A549 (cell line): ENCODE measurements at regions of chr11 and their contacts with region 1.

Region 1: GRCh38 chr11:1694064-1694845 is 2.7 kb upstream of the KRTAP5-6 start:
- DNase-seq: peak; percentile 80 to 88
- ATAC-seq: peak; percentile 82 to 95
- H3K4me3 ChIP-seq: peak overlapping the region; percentile 62
- H3K27ac ChIP-seq: peak overlapping the region; percentile 87 to 92
- H3K4me1 ChIP-seq: no peaks in the 10 kb centered on the region
- CTCF ChIP-seq: peak; percentile 88
- EP300 ChIP-seq: no peak
- POLR2A ChIP-seq: no peak
- RAD21 ChIP-seq: peak; percentile 94 to 99

Region 2: GRCh38 chr11:1532014-1532586 is 162.2 kb before region 1 on chr11:
- CTCF ChIA-PET with region 1: no interaction called
- POLR2A ChIA-PET with region 1: no interaction called
- DNase-seq: no peak
- ATAC-seq: no peak
- H3K4me3 ChIP-seq: no peak overlapping the region
- H3K27ac ChIP-seq: no peak overlapping the region
- H3K4me1 ChIP-seq: no peaks in the 10 kb centered on the region
- CTCF ChIP-seq: no peak
- EP300 ChIP-seq: no peak
- POLR2A ChIP-seq: no peak
- RAD21 ChIP-seq: no peak

Region 3: GRCh38 chr11:1652771-1653540 is 41.3 kb before region 1 on chr11:
- CTCF ChIA-PET with region 1: interaction called, 147 read pairs
- POLR2A ChIA-PET with region 1: interaction called, 5 read pairs
- DNase-seq: peak; percentile 51 to 89
- ATAC-seq: peak; percentile 79 to 93
- H3K4me3 ChIP-seq: no peak overlapping the region
- H3K27ac ChIP-seq: peak overlapping the region in 1 of 2 experiments; percentile 26; a peak in 2 of 6 replicates
- H3K4me1 ChIP-seq: no peaks in the 10 kb centered on the region; the same call in 2 of the 3 replicates
- CTCF ChIP-seq: peak; percentile 93
- EP300 ChIP-seq: no peak
- POLR2A ChIP-seq: no peak
- RAD21 ChIP-seq: peak; percentile 94 to 97

Region 4: DNA sequence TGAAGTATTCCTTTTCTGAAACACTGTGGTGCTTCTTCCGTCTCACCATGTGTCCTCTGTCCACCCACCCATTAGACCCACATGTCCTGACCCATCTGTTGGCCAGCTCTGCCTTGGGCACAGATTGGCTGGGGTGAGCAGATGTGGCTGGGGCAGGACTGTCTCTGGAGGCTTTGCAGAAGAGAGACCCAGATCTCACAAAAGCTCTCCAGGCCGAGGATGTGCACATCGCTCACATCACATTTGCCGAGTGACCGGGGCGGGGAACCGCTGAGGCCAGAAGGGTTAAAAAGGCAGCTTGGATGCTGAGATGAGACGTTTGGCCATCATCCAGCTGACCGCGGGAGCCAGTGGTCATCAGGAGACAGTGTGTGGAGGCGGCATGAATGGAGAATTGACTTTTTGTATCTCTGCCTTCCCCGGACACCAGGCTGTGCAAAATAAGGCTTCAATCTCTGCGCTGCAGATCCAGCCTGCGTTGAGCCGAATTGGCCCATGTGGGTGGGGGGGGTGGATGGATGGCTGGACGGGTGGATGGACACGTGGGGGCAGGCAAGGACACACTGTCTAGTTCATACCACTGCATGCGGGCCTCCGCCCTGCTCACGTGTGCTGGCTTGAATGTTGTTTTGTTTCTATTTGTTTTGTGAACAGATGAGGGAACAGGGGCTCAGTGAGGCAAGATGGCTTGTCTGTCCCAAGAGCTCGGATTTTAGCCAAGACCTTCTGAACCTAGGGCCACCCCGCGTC is 50.1 kb after region 1 on chr11:
- CTCF ChIA-PET with region 1: interaction called, 12 read pairs
- POLR2A ChIA-PET with region 1: interaction called, 5 read pairs
- DNase-seq: no peak
- ATAC-seq: peak in 1 of 2 experiments; percentile 9; a peak in 2 of 6 replicates
- H3K4me3 ChIP-seq: no peak overlapping the region
- H3K27ac ChIP-seq: no peak overlapping the region
- H3K4me1 ChIP-seq: peaks cover 6% of the 10 kb centered on the region; the same call in 2 of the 3 replicates
- CTCF ChIP-seq: no peak
- EP300 ChIP-seq: no peak
- POLR2A ChIP-seq: no peak
- RAD21 ChIP-seq: no peak

Region 5: DNA sequence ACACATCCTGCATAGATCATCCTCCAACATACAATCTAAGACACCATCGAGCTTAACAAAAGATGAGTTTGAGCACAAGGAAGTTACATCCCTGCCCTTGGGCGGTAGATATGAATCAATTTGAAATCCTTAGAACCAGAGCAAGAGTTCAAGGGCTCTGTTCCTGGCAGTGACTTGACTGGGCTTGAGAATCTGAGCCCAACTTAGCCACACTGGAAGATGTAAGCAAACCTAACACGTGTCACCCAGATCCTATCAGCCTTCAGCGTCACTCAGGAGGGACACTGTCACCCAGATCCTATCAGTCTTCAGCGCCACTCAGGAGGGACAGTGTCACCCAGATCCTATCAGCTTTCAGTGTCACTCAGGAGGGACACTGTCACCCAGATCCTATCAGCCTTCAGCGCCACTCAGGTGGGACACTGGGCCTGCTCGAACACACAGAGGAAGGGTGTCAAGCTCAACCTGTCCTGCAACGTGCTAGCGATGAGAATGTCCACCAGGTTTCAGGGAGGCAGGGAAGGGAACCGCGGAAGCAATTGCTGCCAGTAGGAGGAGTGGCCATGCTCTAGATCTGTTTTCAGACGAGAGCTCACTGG is 102.3 kb after region 1 on chr11:
- CTCF ChIA-PET with region 1: interaction called, 20 read pairs
- POLR2A ChIA-PET with region 1: no interaction called
- DNase-seq: no peak
- ATAC-seq: peak in 1 of 2 experiments; percentile 45; a peak in 3 of 6 replicates
- H3K4me3 ChIP-seq: no peak overlapping the region
- H3K27ac ChIP-seq: no peak overlapping the region
- H3K4me1 ChIP-seq: no peaks in the 10 kb centered on the region
- CTCF ChIP-seq: no peak
- EP300 ChIP-seq: no peak
- POLR2A ChIP-seq: no peak
- RAD21 ChIP-seq: no peak

Region 6: DNA sequence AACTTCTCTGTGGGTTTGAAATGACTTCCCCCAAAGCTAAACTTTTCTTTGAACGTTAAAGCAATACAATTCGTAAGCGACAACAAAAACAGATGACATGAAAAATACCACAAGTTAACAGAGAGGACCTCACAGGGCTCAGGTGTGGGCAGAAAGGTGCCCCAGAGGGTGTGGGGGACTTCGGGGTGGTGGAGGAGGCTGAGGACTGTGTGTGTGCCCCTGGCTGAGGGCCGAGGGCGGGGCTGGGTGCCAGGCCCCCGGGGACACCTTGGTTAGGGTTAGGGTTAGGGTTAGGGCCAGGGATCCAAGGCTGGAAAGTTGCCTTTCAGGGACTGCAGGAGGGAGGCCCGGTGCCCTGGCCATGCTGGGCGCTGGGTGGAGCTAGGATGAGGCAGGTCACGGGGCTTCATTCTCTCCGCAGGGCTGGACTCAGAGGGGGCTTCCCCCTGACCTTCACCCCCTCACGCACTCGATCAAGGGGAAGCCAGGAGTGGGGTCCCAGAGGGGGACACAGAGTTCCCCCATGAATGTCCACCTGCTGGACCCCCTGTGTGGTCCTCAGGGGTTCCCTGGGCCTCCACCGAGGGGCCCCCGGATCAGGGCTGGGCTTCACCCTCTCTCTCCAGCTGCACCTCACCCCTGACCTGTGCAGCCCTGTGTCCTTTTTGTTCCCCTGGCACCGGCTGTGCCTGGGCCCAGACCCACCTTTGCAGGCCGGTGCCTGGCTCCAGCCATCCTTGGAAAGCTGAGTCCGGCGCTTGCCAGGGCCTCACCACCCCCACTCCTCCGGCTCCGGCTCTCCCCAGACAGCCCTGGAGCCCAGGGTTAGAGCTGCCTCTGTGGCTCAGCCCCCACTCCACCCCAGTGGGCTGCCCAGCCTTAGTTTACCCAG is 151.6 kb after region 1 on chr11:
- CTCF ChIA-PET with region 1: interaction called, 26 read pairs
- POLR2A ChIA-PET with region 1: no interaction called
- DNase-seq: no peak
- ATAC-seq: no peak
- H3K4me3 ChIP-seq: no peak overlapping the region
- H3K27ac ChIP-seq: no peak overlapping the region
- H3K4me1 ChIP-seq: peaks cover 7% of the 10 kb centered on the region
- CTCF ChIP-seq: no peak
- EP300 ChIP-seq: no peak
- POLR2A ChIP-seq: no peak
- RAD21 ChIP-seq: no peak

Region 7: DNA sequence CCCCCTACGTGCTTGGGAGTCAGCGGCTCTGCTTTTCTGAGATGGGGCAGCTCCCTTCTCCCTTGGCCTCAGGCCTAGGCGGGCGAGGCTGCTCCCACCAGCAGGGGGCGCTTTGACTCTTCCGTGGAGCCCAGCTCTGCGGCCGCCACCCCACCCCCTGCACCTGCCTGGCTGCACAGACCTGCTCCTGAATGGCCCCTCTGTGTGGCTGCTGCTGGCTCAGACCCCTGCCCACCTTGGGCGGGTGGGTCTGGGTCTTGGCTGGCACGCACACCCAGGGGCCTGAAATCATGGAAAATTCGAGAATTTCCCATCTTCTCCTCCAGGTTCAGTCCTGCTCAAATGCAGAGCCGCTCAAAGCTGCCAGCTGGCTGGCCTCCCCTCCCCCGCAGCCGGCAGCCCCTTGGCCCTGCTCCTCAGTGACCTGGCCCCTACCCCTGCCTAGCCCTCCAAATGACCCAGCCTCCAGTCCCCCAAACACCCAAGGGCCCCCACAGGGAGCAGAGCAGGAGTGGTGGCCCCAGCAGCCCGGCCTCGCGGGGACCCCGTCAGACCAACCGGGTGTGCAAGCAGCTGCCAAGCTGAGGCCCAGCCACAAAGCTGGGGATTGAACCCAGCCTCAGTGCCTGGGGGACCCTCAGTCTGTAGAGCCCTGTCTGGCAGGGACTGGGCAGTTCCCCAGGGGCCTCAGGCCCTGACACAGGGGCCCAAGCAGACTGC is 188.4 kb after region 1 on chr11:
- CTCF ChIA-PET with region 1: interaction called, 25 read pairs
- POLR2A ChIA-PET with region 1: no interaction called
- DNase-seq: peak; percentile 73 to 89
- ATAC-seq: peak; percentile 85 to 97
- H3K4me3 ChIP-seq: no peak overlapping the region
- H3K27ac ChIP-seq: no peak overlapping the region; a peak in 1 of 6 replicates
- H3K4me1 ChIP-seq: no peaks in the 10 kb centered on the region
- CTCF ChIP-seq: peak; percentile 81
- EP300 ChIP-seq: no peak
- POLR2A ChIP-seq: no peak
- RAD21 ChIP-seq: peak; percentile 87 to 89

Region 8: GRCh38 chr11:1953489-1954266 is 259.4 kb after region 1 on chr11:
- CTCF ChIA-PET with region 1: interaction called, 16 read pairs
- POLR2A ChIA-PET with region 1: no interaction called
- DNase-seq: no peak
- ATAC-seq: peak; percentile 86 to 95
- H3K4me3 ChIP-seq: no peak overlapping the region
- H3K27ac ChIP-seq: no peak overlapping the region
- H3K4me1 ChIP-seq: no peaks in the 10 kb centered on the region
- CTCF ChIP-seq: peak; percentile 22; the same call in 2 of the 3 replicates
- EP300 ChIP-seq: no peak
- POLR2A ChIP-seq: no peak
- RAD21 ChIP-seq: no peak